Ovary (tissue), 10 donors: ENCODE measurements at regions of chr10 and their contacts with region 1.

Region 1: GRCh38 chr10:119892188-119893065 is at the start of gene SEC23IP:
- DNase-seq: peak; percentile 94 to 96 (median 96)
- H3K4me3 ChIP-seq: peak within 1 kb of the TSS; percentile 74
- H3K27ac ChIP-seq: peak within 1 kb of the TSS; percentile 72 to 73
- H3K4me1 ChIP-seq: peaks cover 21% of the 10 kb centered on the region
- H3K27me3 ChIP-seq: no peaks in the 10 kb centered on the region
- CTCF ChIP-seq: peak in 2 of 3 donors; percentile 25 to 34
- EP300 ChIP-seq: peak; percentile 10
- POLR2A ChIP-seq: peak; percentile 82
- total RNA-seq, gene SEC23IP: 16.0 to 58.0 (median 51.9) TPM

Region 2: GRCh38 chr10:118754720-118755480 is 1137.5 kb before region 1 on chr10 and contains the start of gene CACUL1:
- intact Hi-C with region 1: loop called in 1 of 4 experiments (anchors 10 kb)
- DNase-seq: peak; percentile 100
- H3K4me3 ChIP-seq: peak within 1 kb of the TSS; percentile 100
- H3K27ac ChIP-seq: peak within 1 kb of the TSS; percentile 55 to 78
- H3K4me1 ChIP-seq: no peaks in the 10 kb centered on the region
- H3K27me3 ChIP-seq: no peaks in the 10 kb centered on the region
- CTCF ChIP-seq: no peak
- EP300 ChIP-seq: no peak
- POLR2A ChIP-seq: peak; percentile 74
- total RNA-seq, gene CACUL1: 18.6 to 29.7 (median 26.5) TPM

Region 3: GRCh38 chr10:119686439-119687191 is 205.8 kb before region 1 on chr10:
- intact Hi-C with region 1: loop called in 1 of 4 experiments (anchors 10 kb)
- DNase-seq: peak; percentile 76 to 85 (median 82)
- H3K4me3 ChIP-seq: no peak overlapping the region
- H3K27ac ChIP-seq: no peak overlapping the region
- H3K4me1 ChIP-seq: no peaks in the 10 kb centered on the region
- H3K27me3 ChIP-seq: no peaks in the 10 kb centered on the region
- CTCF ChIP-seq: peak; percentile 82 to 96 (median 87)
- EP300 ChIP-seq: no peak
- POLR2A ChIP-seq: no peak